ENCODE measurements at regions of chr2 and their contacts with region 1.

Region 1: DNA sequence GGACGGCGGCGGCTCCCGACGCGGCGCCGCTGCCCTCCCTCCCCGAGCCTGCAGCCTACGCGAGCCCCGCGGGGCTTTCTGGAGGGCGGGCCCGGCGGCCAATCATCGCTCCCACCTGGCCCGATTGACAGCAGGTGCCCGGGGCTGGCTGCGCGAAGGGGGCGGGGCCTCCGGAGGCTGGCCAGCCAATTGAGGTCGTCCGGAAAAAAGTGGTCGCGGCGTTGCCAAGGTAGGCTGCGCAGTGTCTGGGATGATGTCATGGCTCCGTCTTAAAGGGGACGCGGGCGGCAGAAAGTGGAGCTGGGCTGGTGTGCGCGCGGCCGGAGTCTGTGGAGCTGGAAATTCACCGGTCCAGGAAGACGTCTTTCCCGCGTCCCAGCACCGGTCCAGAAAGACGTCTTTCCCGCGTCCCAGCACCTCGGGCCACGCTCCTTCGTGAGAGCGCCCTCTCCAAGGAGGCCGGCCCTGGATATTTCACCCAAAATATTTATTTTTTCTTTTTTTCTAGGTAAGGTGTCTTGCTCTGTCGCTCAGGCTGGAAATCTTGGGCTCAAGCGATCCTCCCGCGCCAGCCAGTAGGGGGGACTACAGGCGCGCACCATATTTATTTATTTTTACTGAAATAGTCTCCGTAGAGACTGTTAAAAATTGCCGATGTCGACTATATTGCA is at the start of gene ACTR1B:
- DNase-seq: peak; percentile 88 to 95 (median 93)
- H3K4me3 ChIP-seq: peak within 1 kb of the TSS; percentile 63 to 84 (median 75)
- H3K4me3 Mint-ChIP-seq: peak within 1 kb of the TSS; percentile 89 to 94
- H3K27ac ChIP-seq: peak within 1 kb of the TSS; percentile 92 to 94
- H3K27ac Mint-ChIP-seq: peak within 1 kb of the TSS; percentile 92 to 98 (median 96)
- H3K4me1 ChIP-seq: peaks cover 20 to 23% of the 10 kb centered on the region in 2 donors
- H3K4me1 Mint-ChIP-seq: peaks cover 36% of the 10 kb centered on the region
- H3K27me3 ChIP-seq: no peaks in the 10 kb centered on the region
- H3K27me3 Mint-ChIP-seq: peaks cover 0 to 4% (median 2%) of the 10 kb centered on the region in 3 donors
- CTCF ChIP-seq: peak; percentile 57
- polyA plus RNA-seq, gene ACTR1B: 8.9 to 64.4 (median 9.9) TPM

Region 2: DNA sequence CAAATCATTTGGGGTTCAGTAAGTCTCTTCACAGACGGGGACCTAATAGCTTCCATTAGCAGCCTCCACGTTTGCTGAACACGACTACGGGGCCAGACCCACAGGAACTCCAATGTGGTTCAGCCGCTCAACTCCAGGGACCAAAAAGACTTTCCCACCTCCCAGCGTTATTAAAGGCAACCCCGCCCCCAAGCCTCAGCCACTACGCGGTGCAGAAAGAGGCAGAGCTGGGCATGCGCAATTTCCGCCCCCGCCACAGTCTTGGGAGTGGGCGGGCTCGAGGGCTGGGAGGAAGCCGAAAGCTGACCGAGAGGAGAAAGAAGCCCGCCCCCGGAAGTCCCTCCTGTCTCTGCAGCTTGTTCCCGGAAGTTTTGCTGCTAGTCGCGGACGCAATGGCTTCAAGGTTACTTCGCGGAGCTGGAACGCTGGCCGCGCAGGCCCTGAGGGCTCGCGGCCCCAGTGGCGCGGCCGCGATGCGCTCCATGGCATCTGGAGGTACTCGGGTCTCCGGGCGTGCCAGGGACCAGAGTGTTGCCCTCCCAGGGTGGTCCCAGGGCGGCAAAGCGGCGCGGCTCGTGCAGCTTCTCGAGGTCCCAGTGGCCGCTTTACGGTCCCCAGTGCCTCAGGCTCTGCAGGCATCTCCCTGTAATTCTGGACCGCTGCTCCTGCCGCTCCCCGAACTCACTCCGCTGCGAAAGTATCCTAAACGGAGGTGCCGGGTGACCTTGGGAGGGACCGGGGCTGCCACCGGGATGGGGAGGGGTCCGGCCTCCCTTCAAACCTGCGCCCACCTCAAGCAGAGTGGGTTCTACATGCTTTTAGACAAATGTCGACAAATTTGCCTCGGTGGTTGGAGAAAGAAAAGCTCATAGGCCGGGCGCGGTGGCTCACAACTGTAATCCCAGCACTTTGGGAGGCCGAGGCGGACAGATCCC is 18.1 kb before region 1 on chr2 and contains the start of gene COX5B:
- intact Hi-C with region 1: loop called (anchors 2 kb)
- DNase-seq: peak; percentile 97 to 99 (median 98)
- H3K4me3 ChIP-seq: peak within 1 kb of the TSS; percentile 54 to 97 (median 97)
- H3K4me3 Mint-ChIP-seq: peak within 1 kb of the TSS; percentile 89 to 95
- H3K27ac ChIP-seq: peak within 1 kb of the TSS; percentile 96 to 99
- H3K27ac Mint-ChIP-seq: peak within 1 kb of the TSS; percentile 97 to 99 (median 98)
- H3K4me1 ChIP-seq: peaks cover 19 to 23% of the 10 kb centered on the region in 2 donors
- H3K4me1 Mint-ChIP-seq: peaks cover 20% of the 10 kb centered on the region
- H3K27me3 ChIP-seq: no peaks in the 10 kb centered on the region
- H3K27me3 Mint-ChIP-seq: no peaks in the 10 kb centered on the region
- CTCF ChIP-seq: no peak
- polyA plus RNA-seq, gene COX5B: 215 to 598 (median 546) TPM

Measured in CD14-positive monocyte (primary cell).